Activated CD4-positive, alpha-beta T cell treated with anti-CD3 and anti-CD28 coated beads for 36 hours (primary cell): ENCODE measurements at regions of chr6 and their contacts with region 1.

Region 1: GRCh38 chr6:105536961-105537360 is 134.1 kb upstream of the PREP start:
- DNase-seq: no peak
- ATAC-seq: no peak
- H3K4me3 Mint-ChIP-seq: no peak overlapping the region
- H3K27ac Mint-ChIP-seq: no peak overlapping the region
- H3K4me1 Mint-ChIP-seq: no peaks in the 10 kb centered on the region
- H3K27me3 Mint-ChIP-seq: peaks cover 10% of the 10 kb centered on the region

Region 2: GRCh38 chr6:105519881-105520304 is 17.1 kb before region 1 on chr6:
- CTCF ChIA-PET with region 1: no interaction called
- POLR2A ChIA-PET with region 1: interaction called, 17 read pairs
- intact Hi-C with region 1: no loop called
- DNase-seq: no peak
- ATAC-seq: no peak
- H3K4me3 Mint-ChIP-seq: no peak overlapping the region
- H3K27ac Mint-ChIP-seq: no peak overlapping the region
- H3K4me1 Mint-ChIP-seq: peaks cover 4% of the 10 kb centered on the region
- H3K27me3 Mint-ChIP-seq: peaks cover 18% of the 10 kb centered on the region